ENCODE measurements at regions of chr10 and their contacts with region 1.

Region 1: GRCh38 chr10:114140036-114140435 is 34.0 kb downstream of the CCDC186 start:
- DNase-seq: no peak
- H3K4me3 ChIP-seq: no peak overlapping the region
- H3K27ac ChIP-seq: no peak overlapping the region
- H3K4me1 ChIP-seq: peaks cover 6% of the 10 kb centered on the region
- H3K27me3 ChIP-seq: no peaks in the 10 kb centered on the region
- CTCF ChIP-seq: no peak
- POLR2A ChIP-seq: no peak

Region 2: DNA sequence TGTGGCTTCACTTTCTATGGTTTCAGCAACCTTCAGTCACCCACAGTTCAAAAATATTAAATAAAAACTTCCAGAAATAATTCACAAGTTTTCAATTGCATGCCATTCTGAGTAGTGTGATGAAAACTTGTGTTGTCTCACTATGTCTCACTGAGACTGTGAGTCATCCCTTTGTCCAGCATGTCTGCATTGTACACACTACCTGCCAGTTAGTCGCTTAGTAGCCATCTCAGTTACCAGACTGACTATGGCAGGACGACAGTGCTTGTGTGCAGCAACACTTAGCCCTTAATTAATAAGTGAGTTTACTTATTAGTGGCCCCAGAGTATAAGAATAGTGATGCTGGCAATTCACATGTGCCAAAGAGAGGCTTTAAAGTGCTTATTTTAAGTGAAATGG is 11.4 kb after region 1 on chr10:
- CTCF ChIA-PET with region 1: interaction called, 4 read pairs
- POLR2A ChIA-PET with region 1: no interaction called
- dilution Hi-C with region 1: no loop called
- intact Hi-C with region 1: loop called (anchors 2 kb)
- DNase-seq: peak; percentile 73
- H3K4me3 ChIP-seq: no peak overlapping the region
- H3K27ac ChIP-seq: no peak overlapping the region
- H3K4me1 ChIP-seq: peaks cover 3% of the 10 kb centered on the region
- H3K27me3 ChIP-seq: no peaks in the 10 kb centered on the region
- CTCF ChIP-seq: no peak
- POLR2A ChIP-seq: no peak

Measured in endothelial cell of umbilical vein (primary cell).